ENCODE measurements at regions of chr17 and their contacts with region 1.

Region 1: GRCh38 chr17:41648411-41649195 is 24.2 kb upstream of the KRT17 start:
- DNase-seq: peak; percentile 74 to 96
- H3K4me3 ChIP-seq: peak overlapping the region; percentile 26 to 61 (median 44); a peak in 7 of 8 replicates
- H3K27ac ChIP-seq: no peak overlapping the region
- H3K4me1 ChIP-seq: peaks cover 0 to 6% (median 2%) of the 10 kb centered on the region in 4 experiments; a peak in 4 of 7 replicates
- H3K27me3 ChIP-seq: no peaks in the 10 kb centered on the region; a peak in 2 of 7 replicates
- CTCF ChIP-seq: peak; percentile 91 to 97 (median 96)
- EP300 ChIP-seq: no peak
- POLR2A ChIP-seq: no peak
- RAD21 ChIP-seq: peak; percentile 64 to 74

Region 2: DNA sequence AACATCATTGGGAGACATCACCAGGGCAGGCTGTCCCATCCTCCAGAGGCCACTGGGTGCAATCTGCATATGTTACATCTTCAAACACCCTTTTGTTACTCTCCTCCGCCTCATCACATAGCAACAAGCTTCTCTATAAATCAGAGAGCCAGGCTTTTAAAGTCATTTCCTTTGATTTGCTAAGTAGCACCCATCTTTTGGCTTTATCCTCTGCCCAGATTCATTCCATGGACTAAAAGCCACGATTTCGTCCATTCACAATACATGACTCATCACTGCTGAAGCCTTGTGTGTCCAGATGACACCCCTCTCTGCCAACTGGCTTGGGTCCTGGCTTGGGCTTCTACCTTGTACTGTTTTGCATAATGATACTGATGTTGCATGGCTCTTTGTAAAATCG is 205.9 kb before region 1 on chr17:
- CTCF ChIA-PET with region 1: no interaction called
- POLR2A ChIA-PET with region 1: no interaction called
- DNase-seq: no peak
- H3K4me3 ChIP-seq: no peak overlapping the region
- H3K27ac ChIP-seq: no peak overlapping the region
- H3K4me1 ChIP-seq: no peaks in the 10 kb centered on the region
- H3K27me3 ChIP-seq: no peaks in the 10 kb centered on the region; a peak in 1 of 7 replicates
- CTCF ChIP-seq: no peak
- EP300 ChIP-seq: no peak
- POLR2A ChIP-seq: no peak
- RAD21 ChIP-seq: no peak

Region 3: DNA sequence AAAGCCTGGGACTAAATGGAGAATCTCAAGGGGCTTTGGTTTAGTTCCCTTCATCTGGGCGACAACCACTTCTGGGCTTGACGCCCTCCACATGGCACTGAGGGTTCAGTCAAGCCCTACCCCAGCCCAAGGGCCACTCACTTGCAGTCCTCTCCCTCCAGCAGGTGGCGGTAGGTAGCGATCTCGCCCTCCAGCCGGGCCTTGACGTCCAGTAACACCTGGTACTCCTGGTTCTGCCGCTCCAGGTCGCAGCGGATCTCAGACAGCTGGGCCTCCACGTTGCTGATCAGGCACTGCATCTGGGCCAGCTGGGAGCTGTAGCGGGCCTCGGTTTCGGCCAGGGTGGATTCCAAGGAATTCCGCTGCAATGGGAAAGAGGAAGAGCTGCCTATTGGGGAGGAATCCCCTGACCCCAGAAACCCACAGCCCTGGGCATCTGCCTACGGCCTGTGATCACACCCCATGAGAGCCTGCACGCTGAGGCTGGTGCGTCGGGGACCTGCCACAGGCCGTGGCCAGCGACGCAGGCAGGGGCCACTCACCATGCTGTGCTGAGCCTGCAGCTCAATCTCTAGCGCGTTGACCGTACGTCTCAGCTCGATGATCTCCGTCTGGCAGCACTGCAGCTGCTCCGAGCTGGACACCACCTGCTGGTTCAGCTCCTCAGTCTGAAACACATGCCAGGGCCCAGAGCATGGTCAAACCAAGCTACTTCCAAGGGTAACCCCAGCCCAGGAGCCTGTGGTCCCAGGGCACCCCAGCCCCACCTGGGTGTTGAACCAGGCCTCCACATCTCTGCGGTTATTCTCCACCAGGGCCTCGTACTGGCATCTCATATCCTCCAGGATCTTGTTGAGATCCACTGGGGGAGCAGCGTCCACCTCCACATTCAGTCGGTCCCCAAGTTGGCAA is 161.5 kb before region 1 on chr17:
- CTCF ChIA-PET with region 1: interaction called, 12 read pairs
- POLR2A ChIA-PET with region 1: no interaction called
- DNase-seq: peak; percentile 59 to 97
- H3K4me3 ChIP-seq: no peak overlapping the region
- H3K27ac ChIP-seq: no peak overlapping the region
- H3K4me1 ChIP-seq: no peaks in the 10 kb centered on the region; a peak in 2 of 7 replicates
- H3K27me3 ChIP-seq: peaks cover 0 to 12% (median 6%) of the 10 kb centered on the region in 4 experiments; a peak in 6 of 7 replicates
- CTCF ChIP-seq: peak; percentile 90 to 98 (median 93)
- EP300 ChIP-seq: no peak
- POLR2A ChIP-seq: no peak
- RAD21 ChIP-seq: peak; percentile 75 to 83

Region 4: DNA sequence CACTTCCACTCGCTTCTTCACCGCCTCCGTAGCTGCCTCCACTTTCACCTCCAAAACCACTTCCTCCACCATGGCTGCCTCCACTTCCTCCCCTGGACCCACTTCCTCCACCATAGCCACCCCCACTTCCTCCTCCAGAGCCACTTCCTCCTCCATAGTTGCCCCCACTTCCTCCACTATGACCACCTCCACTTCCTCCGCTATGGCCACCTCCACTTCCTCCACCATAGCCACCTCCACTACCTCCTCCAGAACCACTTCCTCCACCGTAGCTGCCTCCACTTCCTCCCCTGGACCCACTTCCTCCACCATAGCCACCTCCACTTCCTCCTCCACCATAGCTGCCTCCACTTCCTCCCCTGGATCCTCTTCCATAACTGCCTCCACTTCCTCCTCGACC is 81.3 kb before region 1 on chr17:
- CTCF ChIA-PET with region 1: interaction called, 27 read pairs
- POLR2A ChIA-PET with region 1: no interaction called
- DNase-seq: no peak
- H3K4me3 ChIP-seq: no peak overlapping the region
- H3K27ac ChIP-seq: no peak overlapping the region
- H3K4me1 ChIP-seq: no peaks in the 10 kb centered on the region
- H3K27me3 ChIP-seq: no peaks in the 10 kb centered on the region
- CTCF ChIP-seq: no peak
- EP300 ChIP-seq: no peak
- POLR2A ChIP-seq: no peak
- RAD21 ChIP-seq: no peak

Region 5: DNA sequence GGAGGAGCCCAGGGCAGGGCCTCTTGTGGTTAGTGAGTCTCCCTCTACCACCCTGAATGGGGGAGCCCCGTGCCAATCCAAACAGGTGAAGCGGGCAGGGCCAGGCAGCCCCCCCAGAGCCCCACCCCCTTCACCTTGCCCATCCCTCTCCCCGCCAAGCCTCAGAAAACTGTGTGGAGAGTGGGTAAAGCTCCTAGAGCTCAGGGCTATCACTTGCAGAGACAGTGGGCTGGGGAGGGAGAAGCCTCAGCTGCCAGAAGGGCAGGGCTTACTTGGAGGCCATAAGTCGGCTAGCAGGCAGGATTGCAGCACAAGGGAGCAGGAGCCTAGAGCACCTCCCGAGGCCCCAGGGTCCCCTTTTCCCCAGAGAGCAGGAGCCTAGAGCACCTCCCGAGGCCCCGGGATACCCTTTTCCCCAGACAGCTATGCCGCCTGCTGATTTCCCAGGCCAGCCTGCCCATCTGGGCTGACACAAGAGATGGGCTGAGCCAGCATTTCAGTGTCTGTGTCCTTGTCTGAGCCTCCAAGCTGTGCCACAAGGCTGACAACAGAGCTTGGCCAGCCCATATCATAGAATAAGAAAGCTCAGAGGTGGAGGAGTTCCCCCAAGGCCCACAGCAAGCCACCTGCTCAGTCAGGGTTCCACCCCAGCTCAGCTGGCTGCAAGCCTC is 55.2 kb before region 1 on chr17:
- CTCF ChIA-PET with region 1: interaction called, 26 read pairs
- POLR2A ChIA-PET with region 1: no interaction called
- DNase-seq: no peak
- H3K4me3 ChIP-seq: no peak overlapping the region
- H3K27ac ChIP-seq: no peak overlapping the region
- H3K4me1 ChIP-seq: no peaks in the 10 kb centered on the region; a peak in 1 of 7 replicates
- H3K27me3 ChIP-seq: no peaks in the 10 kb centered on the region
- CTCF ChIP-seq: no peak
- EP300 ChIP-seq: no peak
- POLR2A ChIP-seq: no peak
- RAD21 ChIP-seq: no peak

Region 6: GRCh38 chr17:41624208-41625101 is 24.1 kb before region 1 on chr17 and contains the start of gene KRT17:
- CTCF ChIA-PET with region 1: interaction called, 103 read pairs
- POLR2A ChIA-PET with region 1: no interaction called
- DNase-seq: no peak
- H3K4me3 ChIP-seq: no peak within 1 kb of the TSS
- H3K27ac ChIP-seq: no peak within 1 kb of the TSS
- H3K4me1 ChIP-seq: peaks cover 0 to 6% (median 0%) of the 10 kb centered on the region in 4 experiments; a peak in 1 of 7 replicates
- H3K27me3 ChIP-seq: no peaks in the 10 kb centered on the region
- CTCF ChIP-seq: peak in 2 of 3 experiments; percentile 10 to 23; a peak in 2 of 4 replicates
- EP300 ChIP-seq: no peak
- POLR2A ChIP-seq: no peak
- RAD21 ChIP-seq: 0 out of 4 replicates have a peak, but pooled peaks of 1 of the 2 experiments have one; percentile 18
- total RNA-seq, gene KRT17: 0.36 and 0.50 TPM in 2 replicates

Region 7: GRCh38 chr17:41665566-41666236 is 17.1 kb after region 1 on chr17:
- CTCF ChIA-PET with region 1: interaction called, 338 read pairs
- POLR2A ChIA-PET with region 1: interaction called, 5 read pairs
- DNase-seq: peak in 1 of 2 experiments; percentile 97
- H3K4me3 ChIP-seq: peak overlapping the region; percentile 12 to 67 (median 44); a peak in 7 of 8 replicates
- H3K27ac ChIP-seq: no peak overlapping the region
- H3K4me1 ChIP-seq: peaks cover 0 to 14% (median 6%) of the 10 kb centered on the region in 4 experiments; a peak in 5 of 7 replicates
- H3K27me3 ChIP-seq: no peaks in the 10 kb centered on the region; a peak in 3 of 7 replicates
- CTCF ChIP-seq: peak; percentile 90 to 92 (median 92)
- EP300 ChIP-seq: no peak; a peak in 1 of 3 replicates
- POLR2A ChIP-seq: no peak
- RAD21 ChIP-seq: peak; percentile 42 to 49

Region 8: DNA sequence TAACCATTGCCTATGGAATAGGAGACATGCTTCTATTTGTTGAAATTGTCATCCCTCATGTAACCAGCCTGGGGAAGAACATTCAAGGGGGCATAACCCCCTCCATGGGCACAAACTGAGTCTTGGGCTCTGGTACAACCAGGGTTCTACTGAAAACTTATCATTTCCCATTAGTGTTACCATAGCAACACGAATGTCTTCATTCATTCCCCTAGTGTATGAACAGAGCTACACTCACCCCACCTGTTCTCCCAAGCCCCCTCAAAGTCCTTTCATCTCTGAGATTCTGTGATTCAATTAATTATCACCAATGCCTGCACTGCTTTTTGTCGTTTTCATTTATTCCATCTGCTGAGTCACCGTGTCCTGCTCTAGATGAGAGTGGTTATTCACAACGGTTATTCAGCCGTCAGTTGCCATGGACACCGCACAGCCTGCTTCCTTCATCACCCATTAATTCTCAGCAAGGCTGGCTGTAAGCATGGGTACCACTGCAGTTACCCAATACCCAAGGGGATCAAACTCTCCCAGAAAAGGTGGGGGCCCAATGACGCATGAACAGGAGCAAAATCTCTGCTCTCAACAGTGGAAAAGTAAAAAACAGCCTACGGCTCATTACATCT is 62.0 kb after region 1 on chr17:
- CTCF ChIA-PET with region 1: no interaction called
- POLR2A ChIA-PET with region 1: no interaction called
- DNase-seq: no peak
- H3K4me3 ChIP-seq: no peak overlapping the region
- H3K27ac ChIP-seq: no peak overlapping the region
- H3K4me1 ChIP-seq: peaks cover 0 to 10% (median 3%) of the 10 kb centered on the region in 4 experiments; a peak in 6 of 7 replicates
- H3K27me3 ChIP-seq: peaks cover 15 to 68% (median 61%) of the 10 kb centered on the region in 4 experiments
- CTCF ChIP-seq: no peak
- EP300 ChIP-seq: no peak
- POLR2A ChIP-seq: no peak
- RAD21 ChIP-seq: no peak

Region 9: DNA sequence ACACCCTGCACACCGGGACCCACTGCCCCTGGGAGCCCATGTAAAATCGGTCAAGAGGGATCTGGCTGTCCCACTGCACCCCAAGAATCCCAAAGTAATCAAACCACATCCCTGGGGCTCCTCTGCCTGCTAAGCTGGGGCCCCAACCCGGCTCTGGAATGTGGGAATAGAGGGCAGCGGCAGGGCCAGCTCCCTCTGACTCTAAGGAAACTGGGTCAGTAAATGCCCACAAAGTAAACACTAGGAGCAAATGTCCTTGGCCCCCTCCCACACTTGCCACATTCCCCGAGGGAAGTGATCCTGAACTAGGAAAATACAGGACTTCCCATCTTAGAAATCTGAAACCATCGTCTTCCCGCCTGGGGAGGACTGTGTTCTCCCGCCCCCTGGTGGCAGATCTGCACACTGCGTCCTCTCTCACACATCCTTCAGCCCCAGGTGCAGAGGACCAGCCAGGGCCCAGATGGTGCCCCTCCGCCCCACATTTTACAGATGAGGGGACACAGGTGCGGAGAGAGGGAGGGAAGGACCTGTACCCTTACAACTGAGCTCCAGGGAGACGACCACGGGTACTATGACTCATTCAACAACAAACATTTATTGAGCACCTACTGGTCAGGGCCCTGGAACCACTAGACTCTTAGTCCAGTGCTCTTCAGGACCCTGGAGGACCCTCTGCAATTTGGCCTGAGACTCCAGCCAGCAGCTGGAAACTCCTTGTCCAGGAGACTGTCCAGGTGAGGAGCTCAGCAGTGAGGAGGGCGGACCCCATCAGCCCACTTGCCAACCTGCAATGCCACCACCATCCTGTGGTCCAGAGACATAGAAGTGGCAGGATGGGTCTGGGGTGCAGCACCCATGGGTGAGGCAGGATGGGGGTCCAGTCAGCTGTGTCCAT is 153.0 kb after region 1 on chr17:
- CTCF ChIA-PET with region 1: no interaction called
- POLR2A ChIA-PET with region 1: no interaction called
- DNase-seq: peak in 1 of 2 experiments; percentile 97
- H3K4me3 ChIP-seq: peak overlapping the region in 2 of 4 experiments; percentile 21 to 34; a peak in 4 of 8 replicates
- H3K27ac ChIP-seq: 0 out of 2 replicates have a peak overlapping the region, but pooled peaks have one; percentile 1
- H3K4me1 ChIP-seq: peaks cover 5 to 15% (median 10%) of the 10 kb centered on the region in 4 experiments
- H3K27me3 ChIP-seq: no peaks in the 10 kb centered on the region
- CTCF ChIP-seq: peak; percentile 92 to 97 (median 97)
- EP300 ChIP-seq: no peak
- POLR2A ChIP-seq: peak in 1 of 2 experiments; percentile 17; a peak in 1 of 3 replicates
- RAD21 ChIP-seq: peak; percentile 88 to 91